Endothelial cell of umbilical vein (primary cell): ENCODE measurements at regions of chr12 and their contacts with region 1.

Region 1: GRCh38 chr12:120301962-120302815 is at the start of gene SIRT4:
- DNase-seq: peak; percentile 98
- H3K4me3 ChIP-seq: peak within 1 kb of the TSS; percentile 16 to 62 (median 27)
- H3K27ac ChIP-seq: peak within 1 kb of the TSS; percentile 77
- H3K4me1 ChIP-seq: no peaks in the 10 kb centered on the region
- H3K27me3 ChIP-seq: no peaks in the 10 kb centered on the region
- CTCF ChIP-seq: peak; percentile 66 to 89
- POLR2A ChIP-seq: peak; percentile 33
- total RNA-seq, gene SIRT4: 1.2 and 1.4 TPM in 2 replicates

Region 2: DNA sequence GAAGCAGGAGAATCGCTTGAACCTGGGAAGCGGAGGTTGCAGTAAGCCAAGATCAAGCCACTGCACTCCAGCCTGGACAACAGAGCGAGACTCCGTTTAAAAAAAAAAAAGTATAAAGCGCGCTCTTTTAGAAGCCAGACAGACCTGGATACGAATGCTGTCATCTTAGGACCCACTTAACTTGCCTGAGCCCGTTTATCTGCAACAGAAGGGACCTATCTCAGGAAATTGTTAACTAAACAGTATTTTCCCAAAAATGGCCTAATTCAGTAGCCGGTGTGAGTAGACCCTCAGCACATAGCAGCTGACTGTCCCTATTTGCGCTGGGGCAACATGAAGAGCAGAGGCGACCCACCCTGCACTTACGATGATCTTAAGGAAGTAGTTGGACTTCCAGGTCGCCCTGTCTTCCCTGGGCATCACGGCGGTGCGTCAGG is 101.8 kb before region 1 on chr12:
- CTCF ChIA-PET with region 1: interaction called, 8 read pairs
- POLR2A ChIA-PET with region 1: interaction called, 15 read pairs
- dilution Hi-C with region 1: no loop called
- intact Hi-C with region 1: no loop called
- DNase-seq: peak; percentile 27
- H3K4me3 ChIP-seq: peak overlapping the region; percentile 31 to 84 (median 78)
- H3K27ac ChIP-seq: peak overlapping the region; percentile 34
- H3K4me1 ChIP-seq: peaks cover 42% of the 10 kb centered on the region
- H3K27me3 ChIP-seq: no peaks in the 10 kb centered on the region
- CTCF ChIP-seq: no peak
- POLR2A ChIP-seq: no peak

Region 3: DNA sequence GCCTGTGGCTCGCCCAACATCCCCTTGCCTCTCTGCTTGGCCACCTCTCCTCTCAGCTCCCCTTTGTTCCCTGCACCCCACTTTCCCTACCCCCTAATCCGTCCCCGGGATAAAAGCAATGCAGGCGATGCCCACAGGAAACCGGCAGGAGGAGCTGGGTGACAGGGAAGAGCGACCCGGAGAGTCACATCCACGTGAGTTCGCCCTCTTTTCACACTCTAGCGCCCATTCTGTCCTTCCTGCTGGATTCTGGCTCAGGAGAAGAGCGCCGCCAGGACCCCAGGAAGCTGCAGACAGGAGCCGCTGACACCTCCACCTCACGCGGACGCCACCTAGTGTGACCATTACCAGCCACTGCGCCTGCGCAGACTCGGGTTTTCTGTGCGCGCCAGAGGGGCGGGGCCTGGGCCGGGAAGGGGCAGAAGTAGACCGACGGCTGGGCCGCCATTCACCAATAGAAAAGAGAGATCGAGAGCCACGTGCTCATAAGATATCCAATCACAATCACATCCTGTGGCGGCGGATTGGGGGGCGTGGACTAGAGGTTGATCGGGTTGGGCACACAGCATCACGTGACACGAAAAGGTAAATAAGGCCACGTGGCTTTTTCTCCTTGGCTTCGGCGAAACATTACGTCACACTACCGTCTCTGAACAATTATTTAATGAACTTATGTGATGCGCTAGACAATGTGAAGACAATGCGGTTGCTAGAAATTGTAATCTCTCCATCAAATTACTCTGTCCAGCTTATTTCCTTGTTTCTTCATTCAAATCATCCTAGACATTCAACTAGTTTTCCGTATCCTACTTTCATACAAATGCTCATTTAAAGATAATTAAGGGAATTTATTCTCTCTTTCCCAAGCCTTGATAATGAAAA is 15.3 kb after region 1 on chr12:
- CTCF ChIA-PET with region 1: interaction called, 72 read pairs
- POLR2A ChIA-PET with region 1: interaction called, 7 read pairs
- dilution Hi-C with region 1: no loop called
- intact Hi-C with region 1: loop called (anchors 1 kb)
- DNase-seq: peak; percentile 100
- H3K4me3 ChIP-seq: peak overlapping the region; percentile 21 to 63 (median 56)
- H3K27ac ChIP-seq: peak overlapping the region; percentile 61
- H3K4me1 ChIP-seq: peaks cover 10% of the 10 kb centered on the region
- H3K27me3 ChIP-seq: peaks cover 0 to 6% of the 10 kb centered on the region in 2 experiments
- CTCF ChIP-seq: peak; percentile 41 to 61
- POLR2A ChIP-seq: peak; percentile 89

Region 4: DNA sequence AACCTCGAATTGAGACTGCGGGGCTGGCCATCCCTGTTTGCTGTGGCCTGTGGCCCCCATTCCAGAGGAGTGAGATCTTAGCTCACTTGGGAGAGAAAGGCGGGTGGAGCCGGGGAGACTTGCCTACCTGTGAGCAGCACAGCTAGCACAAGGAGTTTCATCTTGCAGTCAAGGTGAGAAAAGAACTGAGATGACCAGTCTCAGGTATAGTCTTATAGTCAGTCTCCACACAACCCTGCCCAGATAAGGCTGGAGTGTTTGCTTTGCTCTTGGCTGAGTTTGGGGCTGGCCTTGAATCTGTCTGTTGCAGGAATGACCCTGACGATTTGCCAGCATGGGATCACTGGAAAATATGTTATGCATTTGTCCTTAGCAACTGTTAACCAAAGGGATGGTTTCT is 25.4 kb after region 1 on chr12 and contains the start of gene PLA2G1B:
- CTCF ChIA-PET with region 1: interaction called, 10 read pairs
- POLR2A ChIA-PET with region 1: no interaction called
- dilution Hi-C with region 1: no loop called
- intact Hi-C with region 1: loop called (anchors 1 kb)
- DNase-seq: no peak
- H3K4me3 ChIP-seq: no peak within 1 kb of the TSS
- H3K27ac ChIP-seq: no peak within 1 kb of the TSS
- H3K4me1 ChIP-seq: no peaks in the 10 kb centered on the region
- H3K27me3 ChIP-seq: no peaks in the 10 kb centered on the region
- CTCF ChIP-seq: no peak
- POLR2A ChIP-seq: no peak
- total RNA-seq, gene PLA2G1B: not detected in 2 replicates